HAP-1 (cell line): ENCODE measurements at regions of chr11 and their contacts with region 1.

Region 1: GRCh38 chr11:69670158-69670845 is 4.9 kb downstream of the LTO1 start:
- DNase-seq: peak; percentile 75 to 89
- H3K4me3 ChIP-seq: no peak overlapping the region
- H3K4me1 ChIP-seq: peaks cover 3% of the 10 kb centered on the region
- H3K27me3 ChIP-seq: no peaks in the 10 kb centered on the region

Region 2: DNA sequence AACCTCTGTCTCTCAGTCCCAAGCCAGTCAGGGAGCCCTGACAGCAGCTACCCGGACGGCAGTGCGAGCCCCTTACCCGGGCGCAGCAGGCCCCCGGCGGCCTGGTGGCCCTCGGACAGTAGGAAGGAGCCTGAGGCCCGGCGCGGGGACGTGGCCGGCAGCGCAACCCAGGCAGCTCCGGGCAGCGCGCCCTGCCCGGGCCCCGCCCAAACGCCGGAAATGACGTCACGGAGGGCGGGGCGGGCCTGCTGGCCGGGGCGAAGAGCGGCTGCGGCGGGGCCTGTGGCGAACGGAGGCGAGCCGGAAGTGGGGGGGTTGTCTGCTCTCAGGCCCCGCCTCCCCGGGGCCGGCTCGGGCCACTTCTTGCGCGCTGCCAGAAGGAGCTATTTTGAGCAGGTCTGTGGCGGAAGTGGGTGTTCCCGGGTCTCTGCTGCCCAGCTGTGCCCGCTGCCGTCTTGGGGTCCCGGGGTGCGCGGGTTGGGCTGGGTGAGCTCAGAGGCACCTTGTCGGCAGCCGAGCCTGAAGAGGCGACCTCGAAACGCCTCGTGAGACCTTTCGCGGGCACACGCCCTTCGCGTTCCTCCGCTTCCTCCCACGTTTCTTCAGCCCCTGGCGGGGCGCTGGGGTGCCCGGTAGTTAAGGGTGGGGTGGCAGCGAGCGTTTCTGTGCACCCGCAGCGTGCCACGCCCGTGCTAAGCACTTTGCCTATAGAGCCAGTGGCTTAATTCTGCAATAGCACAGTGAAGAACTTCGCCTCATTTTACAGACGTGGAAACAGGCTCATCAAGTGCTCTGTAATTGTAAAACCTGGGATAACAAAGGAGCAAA is 1398.3 kb before region 1 on chr11 and contains the start of gene C11orf24:
- in situ Hi-C with region 1: loop called (anchors 25 kb)
- DNase-seq: peak; percentile 94 to 96
- H3K4me3 ChIP-seq: peak within 1 kb of the TSS; percentile 97
- H3K4me1 ChIP-seq: peaks cover 4% of the 10 kb centered on the region
- H3K27me3 ChIP-seq: no peaks in the 10 kb centered on the region

Region 3: DNA sequence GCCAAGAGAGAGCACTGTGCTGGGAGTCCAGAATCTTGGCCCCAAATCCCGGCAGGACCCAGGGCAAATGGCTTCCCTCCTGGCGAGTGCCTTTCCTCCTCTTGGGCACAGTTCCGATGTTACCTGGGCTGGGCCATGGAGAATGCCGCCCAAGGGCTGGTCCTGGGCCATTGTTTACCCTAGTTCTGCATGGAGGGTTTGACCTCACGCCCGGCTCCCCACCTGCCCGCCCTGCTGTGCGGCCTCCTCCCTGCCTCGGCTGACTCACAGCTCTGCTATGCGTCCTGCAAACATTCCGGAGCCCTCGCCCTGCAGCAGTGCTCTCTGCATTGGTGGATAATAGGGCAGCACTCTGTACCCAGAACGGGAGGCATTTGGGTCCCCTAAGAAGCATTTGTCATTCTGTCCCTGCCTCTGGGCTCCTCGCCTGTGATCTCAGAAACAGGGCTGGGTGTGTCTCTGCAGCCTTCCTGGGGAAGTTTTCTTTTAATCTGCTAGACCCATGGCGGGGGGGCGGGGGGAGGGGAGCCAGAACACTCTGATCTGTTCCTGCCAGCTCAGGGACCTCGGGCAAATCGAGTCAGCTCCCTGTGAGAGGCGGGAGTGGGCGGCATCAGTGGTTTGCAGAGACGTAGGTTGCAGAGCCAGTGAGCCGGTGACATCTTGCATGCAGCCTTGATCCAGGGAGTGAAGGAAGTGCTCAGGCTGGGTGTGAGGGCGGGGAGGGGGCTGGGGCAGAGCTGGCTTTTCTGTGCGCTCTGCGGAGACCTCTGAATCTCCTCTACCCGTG is 547.5 kb before region 1 on chr11:
- in situ Hi-C with region 1: no loop called
- DNase-seq: peak in 1 of 2 experiments; percentile 69
- H3K4me3 ChIP-seq: no peak overlapping the region
- H3K4me1 ChIP-seq: peaks cover 2% of the 10 kb centered on the region; the same call in 1 of the 2 replicates
- H3K27me3 ChIP-seq: no peaks in the 10 kb centered on the region

Region 4: GRCh38 chr11:69721745-69722144 is 51.4 kb after region 1 on chr11:
- in situ Hi-C with region 1: no loop called
- DNase-seq: peak in 1 of 2 experiments; percentile 23
- H3K4me3 ChIP-seq: no peak overlapping the region
- H3K4me1 ChIP-seq: peaks cover 3% of the 10 kb centered on the region
- H3K27me3 ChIP-seq: peaks cover 3% of the 10 kb centered on the region; the same call in 1 of the 2 replicates